Transverse colon (tissue), 4 donors: ENCODE measurements at regions of chr20 and their contacts with region 1.

Region 1: DNA sequence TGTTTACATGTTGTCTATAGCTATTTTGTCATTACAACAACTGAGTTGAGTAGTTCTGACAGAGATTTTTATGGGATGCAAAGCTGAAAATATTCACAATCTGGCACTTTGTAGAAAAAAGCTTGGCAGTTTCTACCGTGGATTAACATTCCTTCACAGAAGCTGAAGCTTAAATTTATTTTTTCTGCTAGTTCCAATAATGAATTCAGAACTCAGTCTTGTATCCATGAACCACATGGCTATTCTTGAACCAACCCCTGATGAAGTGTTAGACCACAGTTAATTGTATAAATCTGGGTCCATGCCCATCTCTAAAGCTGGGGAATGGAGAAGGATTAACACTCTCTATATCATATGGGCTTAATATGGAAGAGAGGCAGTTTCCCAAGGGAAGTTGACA is 743.8 kb upstream of the FLRT3 start:
- DNase-seq: no peak
- H3K4me3 ChIP-seq: no peak overlapping the region
- H3K27ac ChIP-seq: no peak overlapping the region
- H3K4me1 ChIP-seq: peaks cover 0 to 7% (median 4%) of the 10 kb centered on the region in 4 donors
- H3K27me3 ChIP-seq: no peaks in the 10 kb centered on the region
- CTCF ChIP-seq: no peak
- EP300 ChIP-seq: no peak
- POLR2A ChIP-seq: no peak

Region 2: DNA sequence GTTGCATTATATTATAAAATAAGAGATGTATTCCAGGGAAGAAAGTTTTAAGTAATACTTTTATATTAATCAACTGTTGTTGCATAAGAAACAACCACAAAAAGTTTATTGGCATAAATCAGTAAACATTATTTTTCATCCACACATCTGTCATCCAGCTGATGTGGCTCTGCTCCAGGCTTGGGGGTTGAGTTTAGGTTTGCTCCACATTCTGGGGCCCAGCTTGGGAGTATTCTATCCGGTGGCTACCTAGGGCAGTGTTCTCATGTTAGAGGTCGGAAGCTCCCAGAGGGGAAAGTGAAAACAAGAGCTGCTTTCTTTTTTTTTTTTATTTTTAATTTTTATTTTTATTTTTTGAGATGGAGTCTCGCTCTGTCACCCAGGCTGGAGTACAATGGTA is 15.5 kb before region 1 on chr20:
- in situ Hi-C with region 1: no loop called
- intact Hi-C with region 1: loop called (anchors 1 kb)
- DNase-seq: no peak
- H3K4me3 ChIP-seq: no peak overlapping the region
- H3K27ac ChIP-seq: no peak overlapping the region
- H3K4me1 ChIP-seq: no peaks in the 10 kb centered on the region
- H3K27me3 ChIP-seq: no peaks in the 10 kb centered on the region
- CTCF ChIP-seq: no peak
- EP300 ChIP-seq: no peak
- POLR2A ChIP-seq: no peak